ENCODE measurements at regions of chr2 and their contacts with region 1.

Region 1: DNA sequence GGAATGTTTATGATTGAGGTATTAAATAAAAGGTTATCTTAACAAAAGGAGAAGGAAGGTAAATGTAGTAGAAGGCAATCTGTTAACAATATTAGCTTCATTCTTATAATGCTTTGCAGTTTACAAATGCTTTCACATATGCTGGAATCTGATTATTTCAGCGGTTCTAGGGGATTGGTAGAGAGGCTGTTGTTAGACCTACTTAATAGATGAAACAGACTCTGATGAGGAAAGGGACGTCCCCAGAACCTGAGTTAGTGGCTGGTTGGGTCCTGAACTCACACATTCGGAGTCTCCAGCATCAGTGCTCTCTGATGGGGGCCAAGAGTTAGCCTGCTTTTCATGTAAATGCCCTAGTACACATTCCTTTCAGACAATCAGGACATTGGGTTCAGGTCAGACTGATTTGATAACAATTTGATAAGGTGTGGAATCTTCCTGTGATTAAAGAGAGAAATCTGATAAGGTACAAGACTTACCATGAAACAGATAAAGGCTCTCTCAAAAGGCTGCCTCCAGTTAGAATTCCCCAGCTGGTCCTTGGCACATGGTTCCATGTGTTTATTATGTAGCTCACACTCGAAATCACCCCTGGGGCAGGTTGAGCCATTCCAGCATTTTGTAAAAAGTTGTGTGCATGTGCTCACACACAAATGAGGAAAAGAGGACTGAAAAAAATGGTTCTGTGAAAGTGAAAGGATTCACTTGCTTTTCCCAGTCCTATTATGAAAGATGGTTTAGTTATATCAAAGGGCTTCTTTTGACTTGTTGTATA is 103.1 kb downstream of the GPD2 start:
- DNase-seq: no peak
- H3K4me3 ChIP-seq: no peak overlapping the region
- H3K27ac ChIP-seq: no peak overlapping the region
- H3K4me1 ChIP-seq: no peaks in the 10 kb centered on the region
- H3K27me3 ChIP-seq: no peaks in the 10 kb centered on the region
- CTCF ChIP-seq: no peak

Region 2: DNA sequence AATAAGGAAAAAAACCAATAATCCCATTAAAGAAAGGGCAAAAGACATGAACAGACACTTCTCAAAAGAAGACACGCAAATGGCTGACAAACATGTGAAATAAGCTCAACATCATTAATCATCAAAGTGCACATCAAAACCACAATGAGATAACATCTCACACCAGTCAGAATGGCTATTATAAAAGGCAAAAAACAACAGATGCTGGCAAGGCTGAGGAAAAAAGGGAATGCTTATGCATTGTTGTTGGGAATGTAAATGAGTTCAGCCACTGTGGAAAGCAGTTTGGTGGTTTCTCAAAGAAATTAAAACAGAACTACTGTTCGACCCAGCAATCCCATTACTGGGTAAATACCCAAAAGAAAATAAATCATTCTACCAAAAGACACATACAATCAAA is 492.4 kb before region 1 on chr2:
- CTCF ChIA-PET with region 1: no interaction called
- POLR2A ChIA-PET with region 1: no interaction called
- intact Hi-C with region 1: no loop called
- DNase-seq: no peak
- H3K4me3 ChIP-seq: no peak overlapping the region
- H3K27ac ChIP-seq: no peak overlapping the region
- H3K4me1 ChIP-seq: no peaks in the 10 kb centered on the region
- H3K27me3 ChIP-seq: no peaks in the 10 kb centered on the region
- CTCF ChIP-seq: no peak

Region 3: GRCh38 chr2:156483741-156484176 is 55.5 kb before region 1 on chr2:
- CTCF ChIA-PET with region 1: no interaction called
- POLR2A ChIA-PET with region 1: interaction called, 19 read pairs
- intact Hi-C with region 1: no loop called
- DNase-seq: peak in 1 of 2 experiments; percentile 62
- H3K4me3 ChIP-seq: no peak overlapping the region
- H3K27ac ChIP-seq: peak overlapping the region; percentile 29; the same call in 1 of the 2 replicates
- H3K4me1 ChIP-seq: peaks cover 8% of the 10 kb centered on the region; the same call in 1 of the 2 replicates
- H3K27me3 ChIP-seq: no peaks in the 10 kb centered on the region
- CTCF ChIP-seq: no peak